ENCODE measurements at regions of chr7 and their contacts with region 1.

Region 1: DNA sequence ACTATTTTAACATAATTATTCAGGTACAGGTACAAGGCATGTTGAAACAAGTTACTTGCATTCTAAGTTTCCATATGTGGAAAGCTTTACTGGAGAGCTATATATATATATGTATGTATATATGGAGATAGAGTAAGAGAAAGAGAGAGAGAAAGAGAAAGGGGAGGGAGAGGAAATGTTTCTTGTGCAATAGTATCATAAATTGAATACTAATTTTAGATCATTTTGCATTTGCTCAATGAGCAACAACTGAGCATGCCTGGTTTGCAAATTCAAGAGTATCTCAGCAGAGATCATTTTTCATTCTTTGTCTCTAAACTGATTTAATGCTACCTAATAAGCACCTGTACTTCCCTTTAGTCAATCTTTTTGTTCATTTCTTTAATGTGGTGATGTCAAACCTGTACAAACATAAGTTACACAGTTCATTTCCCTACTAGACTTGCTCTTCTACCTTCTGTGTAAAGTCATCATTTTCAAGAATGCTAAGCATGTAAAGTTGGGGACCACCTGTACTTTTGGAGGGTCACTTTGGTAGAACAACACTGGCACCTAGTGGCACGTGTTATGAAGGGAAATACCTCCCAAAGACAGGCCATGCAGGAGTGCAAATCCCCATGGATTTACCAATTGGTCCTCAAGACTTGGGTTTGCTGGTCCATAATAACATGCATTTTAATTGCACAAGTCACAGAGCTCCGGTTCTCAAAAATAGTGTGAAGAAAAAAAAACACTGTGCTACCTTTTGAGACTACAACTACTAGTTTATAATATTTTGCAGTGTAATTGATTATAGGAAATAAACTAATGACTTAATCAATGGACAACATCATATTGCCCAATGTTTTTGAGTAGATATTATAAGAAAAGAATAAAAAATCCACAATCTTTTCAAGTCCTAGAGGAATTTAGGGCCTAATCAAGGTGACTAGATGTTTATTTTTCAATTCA is 431.2 kb upstream of the IGFBP3 start:
- DNase-seq: peak in 4 of 5 donors; percentile 77 to 90 (median 86)
- H3K4me3 ChIP-seq: no peak overlapping the region
- H3K27ac ChIP-seq: no peak overlapping the region
- H3K4me1 ChIP-seq: no peaks in the 10 kb centered on the region
- H3K27me3 ChIP-seq: no peaks in the 10 kb centered on the region
- CTCF ChIP-seq: peak; percentile 74

Region 2: DNA sequence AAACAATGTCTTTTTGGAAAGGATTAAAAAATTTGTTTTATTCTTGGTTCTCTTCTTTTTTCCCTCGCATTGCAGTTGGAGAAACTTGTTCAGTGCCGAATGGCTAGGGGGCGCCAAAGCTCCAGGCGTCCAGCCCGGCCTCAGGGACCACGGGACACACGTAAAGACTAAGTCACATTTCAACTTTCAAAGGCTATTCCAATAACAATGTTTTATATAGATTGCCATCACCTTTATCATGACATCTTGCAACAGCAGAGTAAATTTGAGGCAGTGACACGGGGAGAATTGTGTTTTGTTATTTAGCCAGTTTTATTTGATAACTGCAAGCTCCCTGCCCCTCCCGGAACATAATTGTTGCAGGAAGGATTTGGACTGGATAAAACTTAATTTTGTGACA is 429.0 kb before region 1 on chr7:
- intact Hi-C with region 1: loop called (anchors 5 kb)
- DNase-seq: peak; percentile 81 to 90 (median 89)
- H3K4me3 ChIP-seq: peak overlapping the region in 2 of 3 donors; percentile 59 to 64
- H3K27ac ChIP-seq: no peak overlapping the region
- H3K4me1 ChIP-seq: peaks cover under 1 to 21% (median 7%) of the 10 kb centered on the region in 3 donors
- H3K27me3 ChIP-seq: peaks cover 5% of the 10 kb centered on the region
- CTCF ChIP-seq: peak; percentile 80